MCF 10A (cell line): ENCODE measurements at regions of chr19 and their contacts with region 1.

Region 1: GRCh38 chr19:49224856-49225255 is 67.3 kb downstream of the TRPM4 start:
- DNase-seq: peak; percentile 77
- H3K4me3 Mint-ChIP-seq: no peak overlapping the region
- H3K27ac Mint-ChIP-seq: no peak overlapping the region
- H3K4me1 Mint-ChIP-seq: no peaks in the 10 kb centered on the region
- H3K27me3 Mint-ChIP-seq: no peaks in the 10 kb centered on the region
- CTCF ChIP-seq: peak; percentile 59

Region 2: DNA sequence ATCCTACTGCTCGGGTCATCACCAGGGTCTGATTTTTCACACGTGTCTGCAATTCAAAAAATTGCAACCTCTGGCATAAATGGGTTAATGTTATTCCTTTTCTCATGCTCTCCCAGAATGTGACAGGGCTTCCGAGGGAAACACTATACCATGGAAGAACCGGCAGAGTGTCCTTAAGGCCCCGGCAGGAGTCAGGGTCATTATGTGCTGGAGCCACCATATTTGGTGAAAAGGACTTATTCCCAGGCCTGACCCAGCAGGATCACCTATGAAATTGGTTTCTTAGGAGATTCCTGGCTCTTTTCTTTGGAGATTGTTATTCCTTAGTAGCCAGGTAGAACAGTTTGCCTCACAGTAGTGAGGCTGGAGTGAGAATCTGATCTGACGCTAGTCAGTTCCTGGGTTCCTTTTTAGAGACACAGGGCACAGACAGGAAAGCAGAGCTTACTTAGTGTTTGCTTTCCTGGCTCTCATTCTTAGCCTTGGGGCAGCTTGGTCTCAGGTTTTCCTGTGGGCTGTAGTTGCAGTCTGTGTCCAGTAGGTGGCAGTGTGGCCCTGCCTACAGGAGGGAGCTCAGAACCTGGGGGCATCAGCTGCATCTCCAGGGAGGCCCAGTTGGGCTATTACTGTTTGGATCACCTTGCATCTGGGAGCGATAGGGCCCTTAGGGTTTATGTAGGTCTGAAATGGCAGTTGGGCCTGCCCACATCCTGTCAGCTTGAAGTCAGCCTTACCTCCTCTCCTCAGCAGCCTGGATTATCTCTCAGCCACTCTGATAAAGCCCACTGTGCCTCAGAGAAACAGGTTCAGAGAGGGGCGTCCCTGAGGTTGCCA is 127.2 kb before region 1 on chr19:
- CTCF ChIA-PET with region 1: interaction called, 9 read pairs
- POLR2A ChIA-PET with region 1: no interaction called
- intact Hi-C with region 1: loop called (anchors 1 kb)
- DNase-seq: peak; percentile 87
- H3K4me3 Mint-ChIP-seq: no peak overlapping the region
- H3K27ac Mint-ChIP-seq: no peak overlapping the region
- H3K4me1 Mint-ChIP-seq: peaks cover 5% of the 10 kb centered on the region
- H3K27me3 Mint-ChIP-seq: no peaks in the 10 kb centered on the region
- CTCF ChIP-seq: peak; percentile 96

Region 3: DNA sequence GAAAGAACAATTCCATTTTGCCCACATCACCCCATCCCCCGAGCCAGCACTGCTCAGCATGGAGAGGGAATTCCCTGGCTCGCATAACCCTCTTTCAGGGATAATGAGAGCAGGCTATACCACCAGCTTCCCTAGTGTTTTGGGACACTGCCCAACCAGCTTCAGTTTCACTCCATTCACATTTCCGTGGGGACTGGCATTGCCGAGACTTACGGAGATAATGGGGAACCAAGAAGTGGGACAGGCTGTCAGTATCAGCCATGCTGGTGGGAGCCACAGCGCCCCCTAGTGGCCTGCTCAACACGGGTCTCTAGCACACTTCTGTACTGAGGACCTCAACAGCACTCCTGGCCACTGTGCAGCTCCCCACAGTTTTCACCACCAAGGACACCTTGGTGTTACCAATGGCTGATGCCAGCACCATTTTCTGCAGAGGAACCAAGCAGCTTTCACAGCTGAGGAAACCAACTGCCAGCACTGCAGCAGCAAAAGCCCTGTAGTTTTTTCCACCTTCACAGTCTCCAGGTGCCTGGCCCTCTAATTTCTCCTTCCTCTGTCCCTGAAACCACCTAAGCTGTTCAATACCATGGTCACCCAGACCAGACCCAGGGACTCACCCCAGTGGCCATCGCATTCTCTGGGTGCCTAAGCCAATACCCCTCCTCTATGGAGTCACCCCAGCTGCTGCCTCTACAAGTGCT is 76.5 kb after region 1 on chr19:
- CTCF ChIA-PET with region 1: interaction called, 17 read pairs
- POLR2A ChIA-PET with region 1: no interaction called
- intact Hi-C with region 1: loop called (anchors 1 kb)
- DNase-seq: peak; percentile 80
- H3K4me3 Mint-ChIP-seq: no peak overlapping the region
- H3K27ac Mint-ChIP-seq: no peak overlapping the region
- H3K4me1 Mint-ChIP-seq: no peaks in the 10 kb centered on the region
- H3K27me3 Mint-ChIP-seq: peaks cover 26% of the 10 kb centered on the region
- CTCF ChIP-seq: peak; percentile 87

Region 4: DNA sequence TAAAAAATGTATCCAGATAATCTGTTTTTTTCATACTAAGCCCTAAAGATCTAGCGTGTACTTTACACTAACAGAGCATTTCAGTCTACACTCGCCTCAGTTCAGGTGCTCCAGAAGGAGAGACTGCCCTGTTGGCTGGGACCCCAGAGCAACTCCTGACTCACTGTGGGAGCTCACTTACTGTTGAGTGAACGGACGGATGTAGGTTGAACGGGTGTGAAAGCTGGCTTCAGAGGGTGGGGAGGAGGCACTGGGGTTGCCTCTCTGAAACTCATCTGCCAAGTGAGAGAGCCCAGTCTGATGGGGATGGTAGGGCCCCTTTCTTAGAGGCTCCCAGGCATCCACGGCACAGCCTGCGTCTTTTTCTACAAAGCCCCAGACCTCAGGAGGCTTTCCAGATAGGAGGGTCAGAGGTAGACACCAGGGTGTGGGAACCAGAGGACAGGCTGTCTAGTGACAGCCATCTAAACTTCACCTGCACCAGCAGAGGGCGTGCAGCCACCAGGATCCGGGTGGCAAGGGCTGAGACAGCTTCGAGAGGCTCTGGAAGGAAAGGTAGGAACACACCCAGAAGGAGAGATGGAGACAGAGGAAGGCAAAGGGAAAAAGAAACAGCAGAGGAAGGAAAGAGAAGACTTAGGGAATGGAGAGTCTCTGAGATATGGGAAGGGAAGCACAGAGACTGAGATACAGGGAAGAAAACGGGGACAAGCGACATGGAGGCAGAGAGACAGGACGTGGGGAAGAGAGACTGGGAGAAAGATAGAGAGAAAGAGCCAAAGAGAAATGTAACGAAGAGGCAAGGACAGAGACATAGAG is 166.9 kb after region 1 on chr19:
- CTCF ChIA-PET with region 1: interaction called, 12 read pairs
- POLR2A ChIA-PET with region 1: no interaction called
- intact Hi-C with region 1: no loop called
- DNase-seq: peak; percentile 86
- H3K4me3 Mint-ChIP-seq: no peak overlapping the region
- H3K27ac Mint-ChIP-seq: no peak overlapping the region
- H3K4me1 Mint-ChIP-seq: peaks cover 6% of the 10 kb centered on the region
- H3K27me3 Mint-ChIP-seq: peaks cover 23% of the 10 kb centered on the region
- CTCF ChIP-seq: peak; percentile 92

Region 5: GRCh38 chr19:49458567-49458903 is 233.7 kb after region 1 on chr19:
- CTCF ChIA-PET with region 1: no interaction called
- POLR2A ChIA-PET with region 1: no interaction called
- intact Hi-C with region 1: no loop called
- DNase-seq: no peak
- H3K4me3 Mint-ChIP-seq: no peak overlapping the region
- H3K27ac Mint-ChIP-seq: no peak overlapping the region
- H3K4me1 Mint-ChIP-seq: no peaks in the 10 kb centered on the region
- H3K27me3 Mint-ChIP-seq: no peaks in the 10 kb centered on the region
- CTCF ChIP-seq: no peak

Region 6: DNA sequence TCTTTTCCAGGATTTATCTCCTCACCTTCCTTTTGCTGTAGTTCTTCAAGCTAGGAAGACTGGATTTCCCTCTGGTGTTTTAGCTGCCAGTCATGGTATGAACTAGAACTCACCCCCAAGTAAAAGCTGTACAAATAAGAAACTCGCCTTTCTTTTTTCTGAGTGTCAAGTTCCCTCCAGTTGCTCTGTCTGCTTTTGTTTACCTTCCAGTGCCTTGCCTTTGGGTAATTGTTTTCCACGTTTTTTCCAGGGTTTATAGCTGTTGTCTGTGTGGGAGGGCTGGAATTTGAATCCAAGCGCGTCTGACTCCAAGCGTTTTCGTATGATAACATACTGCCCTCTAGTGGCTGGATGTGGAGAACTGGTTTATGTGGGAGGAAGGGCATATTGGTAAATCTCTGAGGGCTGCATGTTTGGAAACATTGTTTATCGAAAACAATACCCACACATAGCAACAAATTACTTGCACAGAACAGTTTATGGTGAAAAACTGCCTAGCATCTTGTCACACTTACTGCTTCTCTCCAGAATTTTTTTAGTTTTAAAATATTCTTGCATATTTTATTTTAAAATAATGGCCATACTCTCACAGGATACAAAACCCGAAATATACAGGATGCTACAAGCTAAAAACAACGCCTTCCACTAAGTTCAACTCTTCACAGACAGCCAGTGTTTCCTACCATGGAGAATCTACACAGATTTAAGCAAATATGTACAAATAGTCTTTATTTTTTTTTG is 322.1 kb after region 1 on chr19:
- CTCF ChIA-PET with region 1: interaction called, 4 read pairs
- POLR2A ChIA-PET with region 1: no interaction called
- intact Hi-C with region 1: loop called (anchors 10 kb)
- DNase-seq: peak; percentile 94
- H3K4me3 Mint-ChIP-seq: no peak overlapping the region
- H3K27ac Mint-ChIP-seq: no peak overlapping the region
- H3K4me1 Mint-ChIP-seq: no peaks in the 10 kb centered on the region
- H3K27me3 Mint-ChIP-seq: peaks cover 13% of the 10 kb centered on the region
- CTCF ChIP-seq: peak; percentile 71